ENCODE measurements at regions of chr1 and their contacts with region 1.

Region 1: DNA sequence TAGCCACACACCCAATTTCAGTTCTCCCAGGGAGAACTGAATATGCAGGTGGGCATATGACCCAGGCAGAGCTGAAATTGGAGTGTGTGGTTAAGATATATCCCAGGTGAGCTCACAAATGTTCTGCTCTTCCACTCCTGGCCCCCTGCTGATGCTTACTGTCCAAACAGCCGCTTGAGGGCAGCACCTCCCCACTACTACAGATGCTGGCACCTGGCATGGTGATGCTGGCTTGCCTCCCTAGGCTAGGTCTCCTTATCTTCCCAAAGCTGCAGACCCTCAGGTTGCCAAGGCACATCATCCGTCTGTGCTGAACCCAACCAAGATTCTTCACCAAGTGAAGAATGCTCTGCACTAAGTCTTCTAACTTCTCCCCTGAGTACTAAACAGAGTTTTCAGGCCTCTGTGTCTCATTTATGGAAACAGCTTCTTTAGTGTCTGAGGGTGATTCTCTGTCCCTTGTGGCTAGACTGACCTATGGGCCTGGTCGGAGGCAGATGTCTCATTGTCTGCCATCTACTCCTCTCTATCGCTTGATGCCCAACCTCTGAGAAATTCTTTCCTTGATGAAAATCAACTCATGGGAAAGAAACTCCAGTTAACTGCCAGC is 27.2 kb downstream of the XCL1 start:
- DNase-seq: peak; percentile 63 to 86 (median 79)
- ATAC-seq: peak; percentile 95 to 98 (median 96)
- H3K4me3 ChIP-seq: no peak overlapping the region
- H3K27ac ChIP-seq: no peak overlapping the region
- H3K4me1 ChIP-seq: peaks cover 0 to 8% (median 0%) of the 10 kb centered on the region in 3 donors
- H3K27me3 ChIP-seq: no peaks in the 10 kb centered on the region
- CTCF ChIP-seq: peak; percentile 63 to 80 (median 72)

Region 2: DNA sequence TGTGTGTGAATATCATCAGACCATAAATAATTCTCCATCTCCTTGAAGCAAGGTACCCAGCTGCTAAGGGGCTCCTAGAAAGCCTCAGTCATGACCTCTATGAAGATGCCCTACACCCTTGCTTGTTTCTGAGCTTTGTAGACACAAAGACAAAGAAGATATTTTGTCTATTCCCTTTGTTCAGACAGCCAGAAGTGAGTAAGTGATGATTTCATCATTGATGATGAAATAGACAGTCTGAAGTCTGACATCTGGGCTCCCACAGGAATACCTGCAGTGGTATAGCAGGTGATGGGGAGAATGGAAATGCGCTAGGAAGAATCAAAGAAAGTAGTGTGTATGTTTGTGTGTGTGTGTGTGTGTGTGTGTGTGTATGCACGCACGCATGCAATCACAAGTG is 207.6 kb after region 1 on chr1:
- intact Hi-C with region 1: no loop called
- DNase-seq: no peak
- ATAC-seq: no peak
- H3K4me3 ChIP-seq: no peak overlapping the region
- H3K27ac ChIP-seq: no peak overlapping the region
- H3K4me1 ChIP-seq: no peaks in the 10 kb centered on the region
- H3K27me3 ChIP-seq: no peaks in the 10 kb centered on the region
- CTCF ChIP-seq: no peak

Region 3: DNA sequence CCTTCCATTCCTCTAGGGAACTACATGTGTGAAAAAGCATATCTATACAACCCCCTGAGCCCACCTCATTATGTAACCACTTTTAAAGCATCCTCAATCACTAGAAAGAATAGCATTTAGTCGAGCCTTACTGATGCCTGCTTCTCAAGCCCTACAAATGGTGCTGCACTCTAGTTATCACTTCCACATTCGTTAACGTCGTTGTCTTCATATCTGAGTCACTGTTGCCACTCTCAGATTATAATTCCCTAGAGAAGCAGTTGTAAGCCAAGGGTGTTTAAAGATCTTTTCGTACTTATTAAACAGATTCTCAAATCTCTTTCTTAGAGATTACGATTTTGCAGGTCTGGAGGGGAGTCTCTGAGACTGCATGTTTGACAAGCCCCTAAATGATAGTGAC is 519.4 kb after region 1 on chr1:
- intact Hi-C with region 1: loop called in 1 of 3 experiments (anchors 10 kb)
- DNase-seq: no peak
- ATAC-seq: no peak
- H3K4me3 ChIP-seq: no peak overlapping the region
- H3K27ac ChIP-seq: peak overlapping the region in 1 of 4 donors; percentile 20
- H3K4me1 ChIP-seq: peaks cover 7 to 24% (median 8%) of the 10 kb centered on the region in 3 donors
- H3K27me3 ChIP-seq: no peaks in the 10 kb centered on the region
- CTCF ChIP-seq: no peak